Aorta (tissue), 5 donors: ENCODE measurements at regions of chr9 and their contacts with region 1.

Region 1: GRCh38 chr9:107650321-107650720 is 160.8 kb upstream of the KLF4 start:
- DNase-seq: no peak
- ATAC-seq: no peak
- H3K4me3 ChIP-seq: no peak overlapping the region
- H3K27ac ChIP-seq: no peak overlapping the region
- H3K4me1 ChIP-seq: no peaks in the 10 kb centered on the region
- H3K27me3 ChIP-seq: no peaks in the 10 kb centered on the region

Region 2: DNA sequence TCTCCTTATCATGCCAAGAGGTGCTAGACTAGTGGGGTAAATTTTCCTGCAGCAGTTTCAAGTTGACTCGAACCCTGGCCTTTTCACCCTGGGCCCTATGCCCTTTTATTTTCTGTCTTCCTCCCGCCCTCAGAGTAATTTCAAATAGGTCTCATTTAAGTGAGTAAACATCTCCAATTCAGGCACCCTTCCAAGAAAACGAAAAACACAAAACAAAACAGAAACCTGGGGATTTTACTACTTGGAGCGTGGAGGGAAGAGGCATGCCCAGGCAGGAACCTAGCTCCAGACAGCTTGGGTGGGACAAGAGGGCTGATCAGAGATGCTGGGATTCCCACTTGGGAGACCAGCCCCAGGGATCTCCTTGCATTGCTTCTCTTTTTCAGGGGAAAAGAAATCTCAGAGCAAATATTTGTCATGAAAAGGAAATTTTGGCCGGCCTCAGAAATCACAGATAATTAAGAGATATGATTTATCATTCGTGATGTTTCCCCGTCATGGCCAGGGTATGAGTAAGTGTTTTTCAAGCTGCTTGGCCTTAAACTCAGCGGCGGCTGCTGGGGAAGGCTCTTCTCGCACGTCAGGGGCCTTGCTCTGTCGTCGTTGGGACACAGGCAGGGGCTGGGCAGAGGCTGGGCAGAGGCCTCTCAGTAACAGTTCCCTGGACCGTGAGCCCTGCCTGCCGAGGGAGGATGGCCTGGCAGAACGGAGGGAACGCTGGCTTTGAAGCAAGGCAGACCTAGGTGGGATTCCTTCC is 87.8 kb after region 1 on chr9:
- intact Hi-C with region 1: loop called in 1 of 2 experiments (anchors 5 kb)
- DNase-seq: peak; percentile 76 to 88
- ATAC-seq: peak; percentile 67
- H3K4me3 ChIP-seq: no peak overlapping the region
- H3K27ac ChIP-seq: no peak overlapping the region
- H3K4me1 ChIP-seq: no peaks in the 10 kb centered on the region
- H3K27me3 ChIP-seq: no peaks in the 10 kb centered on the region